Kidney (tissue), 22 donors: ENCODE measurements at regions of chr6 and their contacts with region 1.

Region 1: DNA sequence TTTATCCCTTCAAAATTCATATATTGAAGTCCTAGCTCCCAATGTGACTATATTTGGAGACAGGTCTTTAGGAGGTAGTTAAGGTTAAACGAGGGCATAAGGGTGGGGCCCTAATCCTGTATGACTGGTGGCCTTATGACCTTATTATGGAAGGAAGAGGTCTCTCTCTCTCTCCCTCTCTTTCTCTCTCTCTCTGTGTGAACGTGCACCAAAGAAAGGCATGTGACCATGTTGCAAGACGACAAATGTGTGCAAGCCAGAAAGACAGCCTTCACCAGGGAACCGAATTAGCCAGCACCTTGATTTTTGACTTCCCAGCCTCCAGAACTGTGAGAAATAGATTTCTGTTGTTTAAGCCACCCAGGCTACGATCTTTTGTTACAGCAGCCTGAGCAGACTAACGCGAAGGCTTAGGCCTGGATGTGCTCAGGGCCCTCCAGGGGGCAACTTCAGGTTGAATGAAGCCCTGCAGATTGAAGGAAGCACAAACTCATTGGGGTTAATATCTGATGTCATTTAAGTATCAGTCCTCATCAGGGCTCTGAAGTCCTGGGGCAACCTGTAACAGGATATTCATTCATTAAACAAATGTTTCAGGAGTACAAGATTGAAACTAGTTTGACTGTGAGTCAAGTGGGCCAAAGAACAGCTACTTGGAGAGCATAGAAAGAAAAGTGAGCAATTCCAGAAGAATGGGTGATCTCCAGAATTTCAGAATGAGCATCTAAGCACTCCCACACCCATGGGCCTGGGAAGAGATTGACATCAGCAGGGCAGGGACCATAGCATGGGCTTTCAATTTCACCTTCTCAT is 157.4 kb upstream of the TNFAIP3 start:
- DNase-seq: no peak
- H3K4me3 ChIP-seq: no peak overlapping the region
- H3K27ac ChIP-seq: no peak overlapping the region
- H3K4me1 ChIP-seq: no peaks in the 10 kb centered on the region
- H3K27me3 ChIP-seq: no peaks in the 10 kb centered on the region
- CTCF ChIP-seq: no peak

Region 2: DNA sequence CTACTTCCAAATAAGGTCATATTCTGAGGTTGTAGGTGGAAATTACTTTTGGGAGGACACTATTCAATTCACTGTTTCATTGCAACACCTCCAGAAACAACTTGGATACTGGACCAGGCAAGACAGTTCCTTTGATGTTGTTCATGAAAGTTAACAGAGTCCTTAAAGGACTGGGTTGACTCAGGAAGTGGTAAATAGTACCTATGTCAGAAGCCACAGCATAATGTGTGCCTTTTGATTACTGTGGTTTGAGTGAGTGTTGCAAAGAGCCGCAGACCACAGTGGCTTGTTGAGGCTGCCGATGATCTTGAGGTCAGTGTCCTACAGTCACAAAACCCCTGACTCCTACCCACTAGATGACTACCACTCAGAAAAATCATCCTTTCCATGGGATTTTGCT is 675.8 kb before region 1 on chr6:
- intact Hi-C with region 1: no loop called
- DNase-seq: no peak
- H3K4me3 ChIP-seq: no peak overlapping the region
- H3K27ac ChIP-seq: no peak overlapping the region
- H3K4me1 ChIP-seq: no peaks in the 10 kb centered on the region
- H3K27me3 ChIP-seq: no peaks in the 10 kb centered on the region
- CTCF ChIP-seq: no peak

Region 3: GRCh38 chr6:137873273-137873762 is 163.7 kb after region 1 on chr6:
- intact Hi-C with region 1: no loop called
- DNase-seq: no peak
- H3K4me3 ChIP-seq: peak overlapping the region in 2 of 3 donors; percentile 40 to 44
- H3K27ac ChIP-seq: no peak overlapping the region
- H3K4me1 ChIP-seq: peaks cover 0 to 5% (median 0%) of the 10 kb centered on the region in 3 donors
- H3K27me3 ChIP-seq: no peaks in the 10 kb centered on the region
- CTCF ChIP-seq: no peak

Region 4: DNA sequence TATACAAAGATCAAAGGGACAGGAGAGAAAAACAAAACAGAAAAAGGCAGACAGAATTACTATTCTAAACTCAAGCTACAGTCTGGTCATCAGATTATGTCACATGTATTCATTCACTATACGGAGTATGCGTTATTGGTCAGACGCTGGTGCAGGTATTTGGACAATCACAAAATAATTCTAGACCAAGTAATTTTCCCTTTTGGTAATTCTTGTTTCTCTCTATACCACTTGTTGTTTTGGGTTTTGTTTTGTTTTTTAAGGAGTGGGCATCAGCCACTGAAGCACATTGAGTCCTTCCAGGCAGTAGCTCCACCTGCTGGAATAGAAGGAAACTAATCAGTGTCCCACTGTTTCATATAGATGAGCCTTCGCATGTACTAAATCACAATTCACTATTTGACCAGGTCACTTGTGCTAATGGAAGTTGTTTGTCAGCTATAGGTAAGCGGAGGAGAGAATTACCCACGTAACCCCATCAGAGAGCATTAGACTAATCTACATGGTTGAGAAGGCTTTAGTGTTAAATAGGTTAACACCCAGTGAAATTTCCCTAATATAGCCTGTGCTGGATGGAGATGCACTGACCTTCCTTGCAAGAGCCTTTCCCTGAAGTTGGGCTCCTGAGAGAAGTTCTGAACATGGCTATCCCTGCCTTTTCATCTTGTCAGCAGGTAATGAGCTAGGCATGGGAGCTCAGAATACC is 235.3 kb after region 1 on chr6:
- intact Hi-C with region 1: loop called (anchors 5 kb)
- DNase-seq: peak in 2 of 5 donors; percentile 50 to 70
- H3K4me3 ChIP-seq: no peak overlapping the region
- H3K27ac ChIP-seq: no peak overlapping the region
- H3K4me1 ChIP-seq: peaks cover 0 to 3% (median 0%) of the 10 kb centered on the region in 3 donors
- H3K27me3 ChIP-seq: no peaks in the 10 kb centered on the region
- CTCF ChIP-seq: peak; percentile 80